Transverse colon (tissue), 4 donors: ENCODE measurements at regions of chr10 and their contacts with region 1.

Region 1: DNA sequence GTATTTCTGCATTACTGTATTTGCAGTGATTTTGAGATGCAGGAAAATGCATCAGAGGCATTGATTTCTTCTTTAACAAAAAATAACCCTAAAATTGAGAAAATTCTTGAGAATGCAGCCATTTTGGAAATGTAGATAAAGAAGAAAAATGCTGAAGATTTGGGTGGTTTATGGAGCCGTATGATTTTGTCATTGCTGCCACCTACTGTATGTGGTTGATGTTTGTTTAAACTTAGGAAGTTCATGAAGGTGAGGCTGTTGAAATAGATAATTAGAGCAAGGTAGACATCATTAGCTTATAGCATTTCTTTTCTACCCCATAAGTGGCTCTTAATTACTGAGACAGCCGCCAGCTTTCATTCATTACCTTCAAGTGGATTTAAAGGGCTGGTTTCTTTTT is 92.1 kb upstream of the SAMD8 start:
- DNase-seq: no peak
- H3K4me3 ChIP-seq: no peak overlapping the region
- H3K27ac ChIP-seq: no peak overlapping the region
- H3K4me1 ChIP-seq: peaks cover 3 to 27% (median 9%) of the 10 kb centered on the region in 4 donors
- H3K27me3 ChIP-seq: no peaks in the 10 kb centered on the region
- CTCF ChIP-seq: peak in 3 of 5 experiments; percentile 8 to 26 (median 15)
- EP300 ChIP-seq: no peak
- POLR2A ChIP-seq: no peak

Region 2: GRCh38 chr10:74255888-74256357 is 763.4 kb before region 1 on chr10:
- in situ Hi-C with region 1: loop called in 1 of 4 experiments (anchors 25 kb)
- intact Hi-C with region 1: no loop called
- DNase-seq: no peak
- H3K4me3 ChIP-seq: no peak overlapping the region
- H3K27ac ChIP-seq: no peak overlapping the region
- H3K4me1 ChIP-seq: peaks cover 0 to 17% (median 7%) of the 10 kb centered on the region in 4 donors
- H3K27me3 ChIP-seq: no peaks in the 10 kb centered on the region
- CTCF ChIP-seq: no peak
- EP300 ChIP-seq: no peak
- POLR2A ChIP-seq: no peak

Region 3: GRCh38 chr10:74262856-74263255 is 756.5 kb before region 1 on chr10:
- in situ Hi-C with region 1: loop called in 2 of 4 experiments (anchors 5 to 25 kb)
- intact Hi-C with region 1: no loop called
- DNase-seq: no peak
- H3K4me3 ChIP-seq: no peak overlapping the region
- H3K27ac ChIP-seq: no peak overlapping the region
- H3K4me1 ChIP-seq: peaks cover 0 to 5% (median 2%) of the 10 kb centered on the region in 4 donors
- H3K27me3 ChIP-seq: no peaks in the 10 kb centered on the region
- CTCF ChIP-seq: no peak
- EP300 ChIP-seq: no peak
- POLR2A ChIP-seq: no peak

Region 4: DNA sequence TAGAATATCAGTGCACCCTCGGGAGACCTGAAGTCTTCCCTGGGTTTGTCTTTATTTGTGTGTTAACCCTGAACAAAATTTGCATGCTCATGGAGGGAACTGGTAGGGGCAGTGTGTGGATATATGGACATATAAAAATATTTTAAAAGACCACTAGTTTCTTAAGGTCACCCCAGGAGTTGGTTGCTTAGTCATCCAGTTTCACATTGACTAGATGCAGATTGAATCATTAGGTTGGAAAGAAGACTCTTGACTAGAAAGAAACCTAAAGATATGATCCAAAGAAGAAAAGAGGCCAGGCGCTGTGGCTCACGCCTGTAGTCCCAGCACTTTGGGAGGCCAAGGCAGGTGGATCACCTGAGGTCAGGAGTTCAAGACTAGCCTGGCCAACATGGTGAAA is 55.8 kb before region 1 on chr10:
- in situ Hi-C with region 1: no loop called
- intact Hi-C with region 1: no loop called
- DNase-seq: no peak
- H3K4me3 ChIP-seq: no peak overlapping the region
- H3K27ac ChIP-seq: no peak overlapping the region
- H3K4me1 ChIP-seq: peaks cover 0 to 17% (median 12%) of the 10 kb centered on the region in 4 donors
- H3K27me3 ChIP-seq: no peaks in the 10 kb centered on the region
- CTCF ChIP-seq: no peak
- EP300 ChIP-seq: no peak
- POLR2A ChIP-seq: no peak

Region 5: GRCh38 chr10:75335983-75336382 is 316.6 kb after region 1 on chr10:
- in situ Hi-C with region 1: no loop called
- intact Hi-C with region 1: no loop called
- DNase-seq: no peak
- H3K4me3 ChIP-seq: no peak overlapping the region
- H3K27ac ChIP-seq: no peak overlapping the region
- H3K4me1 ChIP-seq: no peaks in the 10 kb centered on the region
- H3K27me3 ChIP-seq: no peaks in the 10 kb centered on the region
- CTCF ChIP-seq: no peak
- EP300 ChIP-seq: no peak
- POLR2A ChIP-seq: no peak